Esophagus muscularis mucosa (tissue), 4 donors: ENCODE measurements at regions of chr1 and their contacts with region 1.

Region 1: DNA sequence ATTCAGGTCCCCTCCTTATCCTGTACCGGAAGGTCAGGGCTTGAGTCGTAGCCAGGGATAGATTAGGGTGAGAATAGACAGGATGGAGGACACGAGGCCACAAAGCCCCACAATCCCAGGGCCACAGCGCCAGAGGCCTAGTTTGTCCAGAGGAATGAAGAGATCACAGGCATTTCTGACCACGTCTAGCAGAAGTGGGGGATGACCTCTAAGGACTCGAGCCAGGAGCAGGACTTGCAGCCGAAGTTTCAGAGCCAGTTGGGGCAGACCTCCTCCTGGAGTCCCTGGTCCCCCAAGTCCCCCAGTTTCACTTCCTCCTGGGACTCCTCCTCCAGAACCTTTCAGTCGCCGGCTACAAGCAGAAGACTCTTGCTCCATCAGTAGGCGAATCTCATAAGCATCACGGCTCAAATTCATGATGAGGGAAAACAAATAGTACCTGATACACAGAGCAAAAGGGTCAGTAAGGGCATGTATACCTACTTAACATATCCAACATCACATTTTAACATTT is 2.3 kb upstream of the ITGA10 start:
- DNase-seq: no peak
- H3K4me3 ChIP-seq: no peak overlapping the region
- H3K27ac ChIP-seq: no peak overlapping the region
- H3K4me1 ChIP-seq: peaks cover 13 to 23% (median 16%) of the 10 kb centered on the region in 4 donors
- H3K27me3 ChIP-seq: no peaks in the 10 kb centered on the region
- CTCF ChIP-seq: no peak
- EP300 ChIP-seq: no peak
- POLR2A ChIP-seq: no peak

Region 2: DNA sequence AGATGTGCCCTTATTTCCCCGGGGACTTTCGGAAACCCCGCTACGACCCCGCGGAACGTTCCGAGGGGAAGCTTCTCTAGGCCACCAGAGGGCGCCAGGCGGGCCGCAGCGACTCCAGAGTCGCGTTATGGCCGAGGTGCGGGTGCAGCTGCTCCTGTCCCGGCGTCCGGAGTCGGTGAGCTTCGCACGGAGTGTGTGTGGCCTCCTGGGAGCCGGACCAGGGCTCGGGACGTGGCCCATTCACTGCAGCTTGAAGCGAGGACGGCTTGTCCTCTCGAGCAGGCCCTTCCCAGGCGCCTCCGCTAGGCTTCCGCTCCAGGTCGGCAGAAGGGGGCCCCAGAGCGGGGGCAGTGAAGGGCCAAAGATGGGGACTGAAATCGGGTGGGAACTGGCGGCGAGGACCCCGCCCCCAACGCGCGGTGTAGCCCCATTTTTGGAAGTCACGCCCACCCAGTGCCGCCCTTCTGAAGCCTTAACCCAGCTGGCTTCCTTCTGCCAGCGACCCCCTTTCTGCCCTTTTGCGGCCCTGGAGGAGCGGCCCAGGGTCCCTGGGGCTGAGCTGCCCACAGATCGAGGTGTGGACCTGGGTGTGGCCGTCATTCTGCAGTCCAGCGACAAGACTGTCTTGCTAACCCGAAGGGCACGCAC is 66.5 kb before region 1 on chr1 and contains the start of gene NUDT17:
- intact Hi-C with region 1: loop called (anchors 5 kb)
- DNase-seq: no peak
- H3K4me3 ChIP-seq: peak within 1 kb of the TSS; percentile 57 to 62 (median 58)
- H3K27ac ChIP-seq: peak within 1 kb of the TSS; percentile 69 to 80 (median 76)
- H3K4me1 ChIP-seq: peaks cover 10 to 22% (median 18%) of the 10 kb centered on the region in 4 donors
- H3K27me3 ChIP-seq: no peaks in the 10 kb centered on the region
- CTCF ChIP-seq: peak; percentile 88 to 96 (median 91)
- EP300 ChIP-seq: no peak
- POLR2A ChIP-seq: no peak
- total RNA-seq, gene NUDT17: 1.2 to 3.6 (median 1.6) TPM

Region 3: GRCh38 chr1:145957443-145958319 is 45.5 kb after region 1 on chr1 and contains the start of gene LIX1L:
- intact Hi-C with region 1: no loop called
- DNase-seq: peak; percentile 98
- H3K4me3 ChIP-seq: peak within 1 kb of the TSS; percentile 69 to 98 (median 86)
- H3K27ac ChIP-seq: peak within 1 kb of the TSS; percentile 98 to 100 (median 98)
- H3K4me1 ChIP-seq: peaks cover 40 to 84% (median 80%) of the 10 kb centered on the region in 4 donors
- H3K27me3 ChIP-seq: no peaks in the 10 kb centered on the region
- CTCF ChIP-seq: peak in 1 of 3 experiments; percentile 4
- EP300 ChIP-seq: no peak
- POLR2A ChIP-seq: peak; percentile 84
- total RNA-seq, gene LIX1L: 33.2 to 55.0 (median 41.7) TPM